ENCODE measurements at regions of chr12 and their contacts with region 1.

Region 1: GRCh38 chr12:110501752-110502738 is at the starts of genes RAD9B and VPS29:
- DNase-seq: peak; percentile 98
- ATAC-seq: peak; percentile 95
- total RNA-seq, gene RAD9B: 0.25 to 0.37 TPM
- total RNA-seq, gene VPS29: 99.0 to 114 TPM

Region 2: GRCh38 chr12:110355073-110355472 is 147.0 kb before region 1 on chr12:
- intact Hi-C with region 1: no loop called
- DNase-seq: no peak
- ATAC-seq: peak; percentile 47

Region 3: GRCh38 chr12:110379631-110380030 is 122.4 kb before region 1 on chr12:
- intact Hi-C with region 1: no loop called
- DNase-seq: no peak
- ATAC-seq: no peak

Region 4: GRCh38 chr12:110468212-110469048 is 33.6 kb before region 1 on chr12 and contains the starts of genes FAM216A and GPN3:
- intact Hi-C with region 1: loop called in 1 of 2 experiments (anchors 5 kb)
- DNase-seq: peak; percentile 96
- ATAC-seq: peak; percentile 96
- total RNA-seq, gene FAM216A: 1.5 to 1.6 TPM
- total RNA-seq, gene GPN3: 8.1 to 10.2 TPM

Region 5: DNA sequence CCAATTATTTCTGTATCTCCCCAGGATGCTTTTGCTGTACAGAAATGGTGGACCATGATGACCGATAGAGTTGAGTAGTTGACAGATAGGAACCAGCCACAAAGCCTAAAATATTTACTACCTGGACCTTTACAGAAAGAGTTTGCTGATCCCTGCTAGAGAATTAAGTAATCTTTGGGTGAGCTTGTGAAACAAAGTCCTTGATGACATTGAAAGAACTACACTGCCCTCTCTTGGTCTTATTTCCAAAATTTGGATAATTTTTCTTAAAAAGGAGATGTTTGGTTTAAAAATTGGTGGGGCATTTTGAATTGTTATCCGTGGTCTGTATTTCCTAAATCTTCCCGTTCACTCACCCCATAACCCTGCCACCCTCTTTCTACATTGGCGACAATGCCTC is 98.2 kb after region 1 on chr12:
- intact Hi-C with region 1: loop called in 1 of 2 experiments (anchors 10 kb)
- DNase-seq: no peak
- ATAC-seq: peak; percentile 60

Measured in left colon (tissue), 2 donors.